ENCODE measurements at regions of chr4 and their contacts with region 1.

Region 1: GRCh38 chr4:69697536-69698242 is 44.6 kb upstream of the UGT2A1 start:
- DNase-seq: no peak
- H3K4me3 ChIP-seq: no peak overlapping the region
- H3K27ac ChIP-seq: no peak overlapping the region
- H3K4me1 ChIP-seq: no peaks in the 10 kb centered on the region
- H3K27me3 ChIP-seq: no peaks in the 10 kb centered on the region
- CTCF ChIP-seq: no peak
- POLR2A ChIP-seq: no peak

Region 2: DNA sequence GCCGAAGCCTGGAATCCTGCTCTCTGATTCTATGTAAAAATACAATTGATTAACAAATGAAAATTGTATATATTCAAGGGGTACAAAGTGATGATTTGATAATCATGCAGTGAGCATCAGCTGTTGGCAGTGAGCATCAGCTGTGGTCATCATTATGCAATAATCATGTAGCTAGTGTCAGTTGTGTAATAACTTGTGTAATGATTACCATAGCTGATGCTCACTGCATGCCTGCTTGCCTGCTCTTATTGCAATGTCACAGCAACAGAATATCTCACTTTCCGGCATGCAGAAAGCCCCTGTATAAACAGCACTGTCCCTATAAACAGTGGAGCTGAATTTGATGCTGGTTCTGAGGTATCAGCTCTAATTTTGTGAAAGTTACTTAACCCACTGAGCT is 15.9 kb after region 1 on chr4:
- intact Hi-C with region 1: loop called (anchors 1 kb)
- DNase-seq: no peak
- H3K4me3 ChIP-seq: no peak overlapping the region
- H3K27ac ChIP-seq: no peak overlapping the region
- H3K4me1 ChIP-seq: no peaks in the 10 kb centered on the region
- H3K27me3 ChIP-seq: no peaks in the 10 kb centered on the region
- CTCF ChIP-seq: no peak
- POLR2A ChIP-seq: no peak

Region 3: GRCh38 chr4:69731241-69731640 is 33.6 kb after region 1 on chr4:
- intact Hi-C with region 1: no loop called
- DNase-seq: no peak
- H3K4me3 ChIP-seq: no peak overlapping the region
- H3K27ac ChIP-seq: no peak overlapping the region
- H3K4me1 ChIP-seq: no peaks in the 10 kb centered on the region
- H3K27me3 ChIP-seq: no peaks in the 10 kb centered on the region
- CTCF ChIP-seq: no peak
- POLR2A ChIP-seq: no peak